ENCODE measurements at regions of chr10 and their contacts with region 1.

Region 1: DNA sequence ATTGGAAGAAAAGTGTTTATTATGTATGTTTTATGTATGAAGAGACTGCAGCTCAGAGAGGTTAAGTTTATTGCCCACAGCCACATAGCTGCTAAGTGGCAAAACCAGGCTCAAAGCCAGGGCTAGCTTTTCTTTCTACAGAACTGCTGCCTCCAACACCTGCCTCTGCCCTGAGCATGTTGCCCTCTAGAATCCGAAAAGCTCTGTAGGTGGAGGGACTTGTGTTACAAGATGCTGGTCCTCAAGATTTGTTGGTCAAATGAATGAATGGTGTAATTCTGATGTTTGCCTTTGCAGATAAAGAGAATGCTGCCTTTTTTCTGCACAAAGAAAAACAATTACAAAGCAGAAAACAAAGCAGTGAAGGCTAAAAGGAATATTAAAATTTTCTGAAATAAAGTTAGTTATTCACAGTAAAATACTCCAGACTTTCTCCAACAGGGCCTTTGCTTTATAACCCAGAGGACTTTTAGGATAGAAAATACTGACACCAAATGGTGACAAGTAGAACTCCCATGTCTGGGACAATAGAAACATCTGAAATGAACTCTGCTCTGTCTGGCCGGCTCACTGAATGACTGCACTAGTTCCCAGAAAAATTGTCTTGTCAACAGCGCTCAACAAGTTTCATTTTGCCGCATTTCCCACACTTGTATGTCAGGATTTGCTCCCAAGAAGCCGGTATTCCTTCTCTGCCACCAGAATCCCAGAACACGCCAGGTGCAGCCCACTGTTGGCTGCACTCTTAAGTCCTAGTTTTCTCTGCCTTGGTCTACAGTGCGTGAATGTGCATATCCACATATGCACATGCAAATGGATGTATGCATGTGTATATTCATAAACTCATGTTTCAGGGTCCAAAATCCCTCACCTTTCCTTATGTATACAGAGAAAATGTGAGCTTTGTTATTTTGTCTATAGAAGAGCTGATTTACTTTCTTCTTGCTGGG is 11.0 kb upstream of the DNTT start:
- DNase-seq: no peak
- H3K4me3 ChIP-seq: no peak overlapping the region
- H3K27ac ChIP-seq: no peak overlapping the region
- H3K27me3 ChIP-seq: peaks cover 0 to 20% (median 0%) of the 10 kb centered on the region in 45 donors
- CTCF ChIP-seq: peak; percentile 41 to 88 (median 65)

Region 2: DNA sequence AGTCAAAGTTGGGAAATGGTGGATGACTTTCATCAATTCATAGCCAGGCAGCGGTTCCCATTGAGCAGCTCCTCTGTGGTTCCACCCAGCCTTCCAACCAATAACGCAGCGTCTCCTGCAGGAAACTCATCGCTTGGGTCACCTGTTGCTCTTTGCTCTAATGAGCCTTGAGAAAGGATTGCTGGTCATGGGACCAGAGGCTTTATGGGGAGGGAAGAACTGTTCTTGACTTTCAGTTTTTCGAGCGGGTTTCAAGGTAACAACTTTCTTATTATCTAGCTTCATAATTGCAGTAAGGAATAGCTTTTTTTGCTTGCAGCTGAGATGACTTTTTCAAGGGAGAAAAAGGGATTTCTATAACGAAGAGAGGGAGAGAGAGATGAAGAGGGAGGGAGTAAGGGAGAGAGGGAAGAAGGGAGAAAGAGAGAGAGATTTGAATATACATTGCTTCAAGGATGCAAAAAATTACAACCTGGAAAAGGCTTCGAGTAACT is 537.7 kb before region 1 on chr10:
- intact Hi-C with region 1: no loop called
- DNase-seq: peak in 2 of 10 donors; percentile 31 to 38
- H3K4me3 ChIP-seq: peak overlapping the region in 57 of 59 donors; percentile 20 to 63 (median 45)
- H3K27ac ChIP-seq: peak overlapping the region in 54 of 59 donors; percentile 10 to 85 (median 72)
- H3K27me3 ChIP-seq: peaks cover 0 to 7% (median 0%) of the 10 kb centered on the region in 45 donors
- CTCF ChIP-seq: no peak

Region 3: GRCh38 chr10:96017191-96017687 is 276.0 kb before region 1 on chr10:
- intact Hi-C with region 1: loop called (anchors 5 kb)
- DNase-seq: peak in 1 of 10 donors; percentile 18
- H3K4me3 ChIP-seq: no peak overlapping the region
- H3K27ac ChIP-seq: no peak overlapping the region
- H3K27me3 ChIP-seq: no peaks in the 10 kb centered on the region
- CTCF ChIP-seq: peak; percentile 51 to 85 (median 73)

Region 4: GRCh38 chr10:96229568-96230030 is 63.6 kb before region 1 on chr10:
- intact Hi-C with region 1: loop called in 1 of 2 experiments (anchors 5 kb)
- DNase-seq: peak; percentile 26 to 67 (median 58)
- H3K4me3 ChIP-seq: no peak overlapping the region
- H3K27ac ChIP-seq: no peak overlapping the region
- H3K27me3 ChIP-seq: no peaks in the 10 kb centered on the region
- CTCF ChIP-seq: peak; percentile 19 to 72 (median 57)

Region 5: DNA sequence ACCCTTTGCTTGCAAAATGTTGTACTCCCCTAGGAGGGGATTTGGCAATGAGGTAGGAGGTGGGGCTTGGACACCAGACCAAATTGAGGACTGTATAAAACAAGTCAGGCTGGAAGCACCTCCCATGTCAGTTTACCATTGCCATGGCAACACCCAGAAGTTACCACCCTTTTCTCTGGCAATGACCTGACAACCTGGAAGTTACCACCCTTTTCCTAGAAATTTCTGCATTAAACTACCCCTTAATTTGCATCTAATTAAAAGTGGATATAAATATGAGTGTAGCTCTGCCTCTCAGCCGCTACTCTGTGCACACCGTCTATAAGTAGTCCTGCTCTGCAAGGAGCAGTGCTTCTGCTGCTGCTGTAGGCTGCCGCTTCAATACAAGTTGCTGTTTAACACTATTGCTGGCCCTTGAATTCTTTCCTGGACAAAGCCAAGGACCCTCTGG is 14.0 kb before region 1 on chr10:
- intact Hi-C with region 1: no loop called
- DNase-seq: no peak
- H3K4me3 ChIP-seq: no peak overlapping the region
- H3K27ac ChIP-seq: no peak overlapping the region
- H3K27me3 ChIP-seq: peaks cover 0 to 3% (median 0%) of the 10 kb centered on the region in 45 donors
- CTCF ChIP-seq: no peak

Measured in dorsolateral prefrontal cortex (tissue), 120 donors.